ENCODE measurements at regions of chr18 and their contacts with region 1.

Region 1: DNA sequence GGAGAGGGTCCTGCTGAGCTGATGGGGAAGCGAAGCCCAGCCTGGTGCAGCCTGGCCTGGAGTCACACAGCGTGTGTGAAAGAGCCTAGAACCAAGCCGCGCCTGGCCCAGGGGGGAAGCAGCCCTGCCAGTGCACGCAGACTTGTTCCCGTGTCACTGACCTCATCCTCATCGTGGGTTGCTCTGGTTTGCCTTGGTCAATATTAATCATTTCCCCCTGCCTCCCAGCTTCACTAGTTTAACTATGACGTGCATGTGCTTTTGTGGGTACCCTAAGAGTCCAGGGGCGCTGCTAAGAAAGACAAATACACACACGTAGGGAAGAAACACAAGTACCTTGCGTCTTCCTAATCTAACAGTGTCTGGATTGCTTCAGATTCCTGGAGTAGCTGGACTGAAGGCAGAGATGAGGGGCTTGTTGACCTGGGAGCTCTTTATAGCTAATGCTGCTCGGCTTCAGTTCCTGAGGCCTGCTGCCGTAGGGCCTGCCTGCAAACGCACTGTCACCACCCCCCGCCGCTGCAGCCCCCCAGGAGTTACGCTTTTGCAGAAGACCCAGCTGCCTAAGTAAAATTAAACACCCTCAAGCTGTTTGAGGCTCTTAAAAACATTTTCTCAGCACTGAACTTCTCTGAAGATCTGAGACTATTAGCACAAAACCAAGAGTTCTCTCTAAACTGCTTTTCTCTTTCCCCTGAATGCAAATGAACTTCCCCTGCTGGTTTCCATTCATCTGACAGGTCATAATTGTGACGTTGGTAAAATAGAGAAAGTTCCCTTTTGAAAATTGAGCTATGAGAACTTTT is 159.2 kb downstream of the FAM210A start:
- DNase-seq: peak; percentile 62
- ATAC-seq: peak; percentile 37
- H3K4me3 Mint-ChIP-seq: peak overlapping the region; percentile 39
- H3K27ac Mint-ChIP-seq: peak overlapping the region; percentile 86
- H3K4me1 Mint-ChIP-seq: peaks cover 82% of the 10 kb centered on the region
- H3K27me3 Mint-ChIP-seq: no peaks in the 10 kb centered on the region

Region 2: GRCh38 chr18:13375302-13376255 is 191.6 kb before region 1 on chr18:
- CTCF ChIA-PET with region 1: interaction called, 3 read pairs
- POLR2A ChIA-PET with region 1: no interaction called
- intact Hi-C with region 1: loop called (anchors 1 to 5 kb)
- DNase-seq: peak; percentile 91
- ATAC-seq: peak; percentile 73
- H3K4me3 Mint-ChIP-seq: peak overlapping the region; percentile 63
- H3K27ac Mint-ChIP-seq: peak overlapping the region; percentile 97
- H3K4me1 Mint-ChIP-seq: peaks cover 84% of the 10 kb centered on the region
- H3K27me3 Mint-ChIP-seq: no peaks in the 10 kb centered on the region

Region 3: GRCh38 chr18:13577091-13577697 is 10.1 kb after region 1 on chr18:
- CTCF ChIA-PET with region 1: interaction called, 7 read pairs
- POLR2A ChIA-PET with region 1: interaction called, 5 read pairs
- intact Hi-C with region 1: loop called (anchors 1 kb)
- DNase-seq: peak; percentile 73
- ATAC-seq: peak; percentile 90
- H3K4me3 Mint-ChIP-seq: peak overlapping the region; percentile 22
- H3K27ac Mint-ChIP-seq: peak overlapping the region; percentile 55
- H3K4me1 Mint-ChIP-seq: peaks cover 47% of the 10 kb centered on the region
- H3K27me3 Mint-ChIP-seq: no peaks in the 10 kb centered on the region

Region 4: GRCh38 chr18:13585379-13586153 is 18.4 kb after region 1 on chr18:
- CTCF ChIA-PET with region 1: interaction called, 3 read pairs
- POLR2A ChIA-PET with region 1: interaction called, 5 read pairs
- intact Hi-C with region 1: loop called in 1 of 2 experiments (anchors 1 kb)
- DNase-seq: no peak
- ATAC-seq: no peak
- H3K4me3 Mint-ChIP-seq: no peak overlapping the region
- H3K27ac Mint-ChIP-seq: peak overlapping the region; percentile 35
- H3K4me1 Mint-ChIP-seq: peaks cover 56% of the 10 kb centered on the region
- H3K27me3 Mint-ChIP-seq: no peaks in the 10 kb centered on the region

Region 5: GRCh38 chr18:13661779-13662256 is 94.7 kb after region 1 on chr18:
- CTCF ChIA-PET with region 1: no interaction called
- POLR2A ChIA-PET with region 1: no interaction called
- intact Hi-C with region 1: no loop called
- DNase-seq: no peak
- ATAC-seq: no peak
- H3K4me3 Mint-ChIP-seq: no peak overlapping the region
- H3K27ac Mint-ChIP-seq: no peak overlapping the region
- H3K4me1 Mint-ChIP-seq: peaks cover 7% of the 10 kb centered on the region
- H3K27me3 Mint-ChIP-seq: no peaks in the 10 kb centered on the region

Measured in activated CD4-positive, alpha-beta T cell treated with anti-CD3 and anti-CD28 coated beads for 36 hours (primary cell).